OCI-LY7 (cell line): ENCODE measurements at regions of chr10 and their contacts with region 1.

Region 1: DNA sequence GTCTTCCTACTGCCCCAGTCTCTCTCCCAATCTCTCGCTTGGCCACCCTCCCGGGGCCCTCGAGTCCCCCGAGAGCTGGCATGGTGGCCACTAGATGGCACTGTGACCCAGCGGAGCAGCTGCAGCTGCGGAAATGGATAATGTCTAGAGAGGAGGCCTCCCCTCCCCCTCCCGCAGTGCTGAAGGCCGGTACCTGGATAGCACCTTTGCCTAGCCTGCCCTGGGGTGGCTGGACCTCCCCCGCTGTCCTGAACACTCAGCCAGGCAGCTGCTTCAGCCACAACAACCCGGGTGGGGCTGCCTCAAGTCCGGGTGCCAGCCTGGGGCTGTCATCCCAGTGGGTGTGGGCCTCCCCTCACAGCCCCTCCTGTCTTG is 65.2 kb downstream of the GOLGA7B start:
- DNase-seq: peak; percentile 80
- H3K4me3 ChIP-seq: no peak overlapping the region
- H3K27ac ChIP-seq: no peak overlapping the region
- H3K4me1 ChIP-seq: no peaks in the 10 kb centered on the region
- CTCF ChIP-seq: peak; percentile 93

Region 2: DNA sequence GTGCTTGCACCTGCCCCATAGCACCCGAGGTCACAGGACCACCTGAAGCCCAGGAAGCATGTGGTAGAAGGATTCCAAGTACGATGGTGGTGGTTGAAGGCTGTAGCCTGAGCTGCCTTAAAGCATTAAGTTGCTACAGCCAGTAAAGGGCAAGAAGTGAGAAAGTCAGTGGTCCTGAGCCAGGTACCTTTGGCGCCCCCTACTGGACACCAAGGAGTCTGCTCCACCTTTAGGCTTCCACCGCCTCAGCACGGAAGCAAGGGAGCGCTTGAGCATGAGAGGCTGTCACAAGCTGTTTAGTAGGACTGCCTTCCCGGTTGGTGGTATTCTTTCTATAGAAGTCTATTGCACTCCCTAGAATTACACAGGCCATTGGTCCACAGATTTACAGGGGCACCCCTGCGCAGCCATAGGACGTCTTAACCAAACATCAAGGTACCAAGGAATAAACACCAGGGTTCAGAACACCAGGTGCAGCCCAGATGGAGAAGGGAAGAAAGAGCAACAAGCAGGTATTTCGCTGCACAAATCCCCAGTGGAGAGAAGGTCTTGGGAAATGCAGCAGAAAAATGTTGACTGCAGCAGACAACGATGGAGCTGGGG is 113.4 kb after region 1 on chr10:
- CTCF ChIA-PET with region 1: no interaction called
- POLR2A ChIA-PET with region 1: no interaction called
- intact Hi-C with region 1: loop called (anchors 5 kb)
- DNase-seq: peak; percentile 72
- H3K4me3 ChIP-seq: no peak overlapping the region
- H3K27ac ChIP-seq: no peak overlapping the region
- H3K4me1 ChIP-seq: no peaks in the 10 kb centered on the region
- CTCF ChIP-seq: peak; percentile 93

Region 3: DNA sequence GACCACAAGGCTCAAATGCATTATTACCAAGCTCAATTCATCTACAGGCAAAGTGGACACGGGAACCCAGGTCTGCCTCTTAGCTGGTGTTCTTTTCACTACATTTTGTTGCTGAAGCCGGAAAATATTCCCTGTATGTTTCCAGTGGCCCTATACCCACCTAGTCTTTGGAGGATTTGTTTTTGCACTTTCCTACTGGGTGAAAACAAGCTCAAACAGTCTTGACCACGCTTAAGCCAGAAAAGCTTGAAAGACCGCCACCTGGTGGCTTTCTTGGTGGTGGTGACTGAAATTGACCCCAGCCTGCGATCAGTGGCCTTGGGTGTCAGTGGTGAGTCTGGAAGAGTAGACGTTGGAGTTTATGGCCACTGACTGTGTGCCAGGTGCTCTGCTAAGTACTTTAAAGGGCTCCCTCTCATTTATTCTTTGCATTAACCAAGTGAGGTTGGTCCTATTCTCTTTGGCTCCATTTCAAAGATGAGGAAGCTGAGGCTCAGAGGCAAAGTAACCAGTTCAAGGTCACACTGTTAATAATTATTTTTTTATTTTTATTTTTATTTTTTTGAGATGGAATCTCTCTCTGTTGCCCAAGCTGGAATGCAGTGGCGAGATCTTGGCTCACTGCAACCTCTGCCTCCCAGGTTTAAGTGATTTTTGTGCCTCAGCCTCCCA is 126.7 kb after region 1 on chr10:
- CTCF ChIA-PET with region 1: interaction called, 4 read pairs
- POLR2A ChIA-PET with region 1: no interaction called
- intact Hi-C with region 1: loop called (anchors 2 kb)
- DNase-seq: peak; percentile 72
- H3K4me3 ChIP-seq: no peak overlapping the region
- H3K27ac ChIP-seq: no peak overlapping the region
- H3K4me1 ChIP-seq: no peaks in the 10 kb centered on the region
- CTCF ChIP-seq: peak; percentile 91

Region 4: GRCh38 chr10:98170249-98171117 is 255.7 kb after region 1 on chr10:
- CTCF ChIA-PET with region 1: no interaction called
- POLR2A ChIA-PET with region 1: no interaction called
- intact Hi-C with region 1: loop called (anchors 10 kb)
- DNase-seq: peak; percentile 74
- H3K4me3 ChIP-seq: peak overlapping the region; percentile 58
- H3K27ac ChIP-seq: peak overlapping the region; percentile 100
- H3K4me1 ChIP-seq: peaks cover 60% of the 10 kb centered on the region
- CTCF ChIP-seq: peak; percentile 90

Region 5: DNA sequence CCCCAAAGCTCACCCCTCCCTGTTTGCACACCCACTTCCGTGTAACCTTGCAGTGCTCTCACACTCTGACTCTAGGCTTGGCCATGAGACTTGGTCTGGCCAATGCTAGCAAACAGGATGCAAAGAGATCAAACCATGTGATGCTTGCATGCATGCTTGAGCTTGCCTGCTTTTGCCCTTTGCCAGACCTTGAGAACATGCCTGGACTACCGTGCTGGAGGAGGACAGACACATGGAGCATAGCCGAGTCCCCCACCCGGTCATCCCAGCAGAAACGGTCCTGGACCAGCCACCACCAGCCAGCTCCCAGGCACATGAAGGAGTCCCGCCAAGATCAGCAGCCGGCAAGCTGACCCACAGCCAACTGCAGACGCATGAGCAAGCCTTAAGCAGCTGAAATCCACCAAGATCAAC is 476.8 kb after region 1 on chr10:
- CTCF ChIA-PET with region 1: interaction called, 3 read pairs
- POLR2A ChIA-PET with region 1: no interaction called
- intact Hi-C with region 1: loop called (anchors 10 kb)
- DNase-seq: peak; percentile 25
- H3K4me3 ChIP-seq: no peak overlapping the region
- H3K27ac ChIP-seq: no peak overlapping the region
- H3K4me1 ChIP-seq: peaks cover 9% of the 10 kb centered on the region
- CTCF ChIP-seq: no peak

Region 6: GRCh38 chr10:98467506-98468346 is 552.9 kb after region 1 on chr10:
- CTCF ChIA-PET with region 1: no interaction called
- POLR2A ChIA-PET with region 1: no interaction called
- intact Hi-C with region 1: loop called (anchors 10 kb)
- DNase-seq: peak; percentile 86
- H3K4me3 ChIP-seq: peak overlapping the region; percentile 61
- H3K27ac ChIP-seq: no peak overlapping the region
- H3K4me1 ChIP-seq: peaks cover 3% of the 10 kb centered on the region
- CTCF ChIP-seq: peak; percentile 85

Region 7: GRCh38 chr10:98664331-98665042 is 749.7 kb after region 1 on chr10:
- CTCF ChIA-PET with region 1: no interaction called
- POLR2A ChIA-PET with region 1: no interaction called
- intact Hi-C with region 1: loop called (anchors 5 kb)
- DNase-seq: peak; percentile 52
- H3K4me3 ChIP-seq: no peak overlapping the region
- H3K27ac ChIP-seq: no peak overlapping the region
- H3K4me1 ChIP-seq: no peaks in the 10 kb centered on the region
- CTCF ChIP-seq: peak; percentile 88